ENCODE measurements at regions of chr19 and their contacts with region 1.

Region 1: DNA sequence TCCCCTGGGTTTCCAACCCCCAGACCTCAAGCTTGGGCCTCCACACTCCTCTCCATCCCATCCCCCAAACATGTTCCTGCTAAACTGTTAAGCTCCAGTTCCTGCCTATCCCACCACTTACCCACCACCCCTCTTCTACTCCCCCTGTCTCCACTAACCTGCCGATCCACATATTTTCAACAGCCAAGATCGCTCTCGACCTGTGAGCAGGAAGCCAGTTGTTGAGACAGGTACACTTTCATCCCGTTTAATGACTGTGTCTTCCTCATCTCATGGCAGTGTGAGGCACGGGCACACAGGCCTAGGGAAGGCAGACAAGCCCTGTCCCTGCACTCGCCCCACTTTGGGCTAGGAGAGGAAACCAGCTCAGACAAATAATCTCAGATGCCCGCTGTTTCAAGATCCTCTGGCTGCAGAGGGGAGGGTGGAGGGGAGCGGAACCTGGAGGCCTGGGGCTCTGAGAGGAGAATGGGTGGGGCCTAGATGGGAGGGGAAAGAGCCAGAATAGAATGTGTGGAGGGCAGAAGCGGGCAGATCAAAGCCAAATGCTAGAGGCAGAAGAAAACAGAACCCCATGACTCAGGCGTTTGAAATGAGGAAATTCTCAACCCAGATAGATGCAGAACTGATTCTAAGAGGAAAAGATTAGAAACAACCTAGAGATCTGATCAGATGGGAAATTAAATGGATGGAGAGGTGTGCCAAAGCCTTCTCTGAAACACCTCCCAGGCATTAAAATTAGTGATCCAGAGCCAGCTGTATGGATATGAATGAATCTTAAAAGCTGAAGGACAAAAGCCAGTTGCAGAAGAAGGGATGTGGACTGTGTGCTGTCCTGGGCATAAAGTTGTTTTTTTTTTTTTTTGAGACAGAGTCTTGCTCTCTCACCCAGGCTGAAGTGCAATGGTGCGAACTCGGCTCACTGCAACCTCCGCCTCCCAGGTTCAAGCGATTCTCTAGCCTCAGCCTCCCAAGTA is 16.9 kb upstream of the CYP2S1 start:
- DNase-seq: peak; percentile 40
- H3K4me3 ChIP-seq: no peak overlapping the region
- H3K27ac ChIP-seq: no peak overlapping the region
- H3K4me1 ChIP-seq: no peaks in the 10 kb centered on the region
- H3K27me3 ChIP-seq: no peaks in the 10 kb centered on the region
- CTCF ChIP-seq: no peak

Region 2: GRCh38 chr19:41161903-41162302 is 14.2 kb before region 1 on chr19:
- CTCF ChIA-PET with region 1: interaction called, 17 read pairs
- POLR2A ChIA-PET with region 1: no interaction called
- intact Hi-C with region 1: no loop called
- DNase-seq: peak; percentile 25
- H3K4me3 ChIP-seq: no peak overlapping the region
- H3K27ac ChIP-seq: no peak overlapping the region
- H3K4me1 ChIP-seq: no peaks in the 10 kb centered on the region
- H3K27me3 ChIP-seq: no peaks in the 10 kb centered on the region
- CTCF ChIP-seq: peak; percentile 55

Region 3: GRCh38 chr19:41363753-41364523 is 187.8 kb after region 1 on chr19 and contains the start of gene B9D2:
- CTCF ChIA-PET with region 1: no interaction called
- POLR2A ChIA-PET with region 1: no interaction called
- intact Hi-C with region 1: no loop called
- DNase-seq: peak; percentile 99
- H3K4me3 ChIP-seq: peak within 1 kb of the TSS; percentile 79
- H3K27ac ChIP-seq: peak within 1 kb of the TSS; percentile 100
- H3K4me1 ChIP-seq: peaks cover 6% of the 10 kb centered on the region
- H3K27me3 ChIP-seq: no peaks in the 10 kb centered on the region
- CTCF ChIP-seq: no peak
- total RNA-seq, gene B9D2: 9.9 and 10.7 TPM in 2 replicates